GM10248 (cell line): ENCODE measurements at regions of chr7 and their contacts with region 1.

Region 1: GRCh38 chr7:133434055-133434865 is 181.4 kb downstream of the EXOC4 start:
- DNase-seq: peak; percentile 19
- CTCF ChIP-seq: peak; percentile 34

Region 2: DNA sequence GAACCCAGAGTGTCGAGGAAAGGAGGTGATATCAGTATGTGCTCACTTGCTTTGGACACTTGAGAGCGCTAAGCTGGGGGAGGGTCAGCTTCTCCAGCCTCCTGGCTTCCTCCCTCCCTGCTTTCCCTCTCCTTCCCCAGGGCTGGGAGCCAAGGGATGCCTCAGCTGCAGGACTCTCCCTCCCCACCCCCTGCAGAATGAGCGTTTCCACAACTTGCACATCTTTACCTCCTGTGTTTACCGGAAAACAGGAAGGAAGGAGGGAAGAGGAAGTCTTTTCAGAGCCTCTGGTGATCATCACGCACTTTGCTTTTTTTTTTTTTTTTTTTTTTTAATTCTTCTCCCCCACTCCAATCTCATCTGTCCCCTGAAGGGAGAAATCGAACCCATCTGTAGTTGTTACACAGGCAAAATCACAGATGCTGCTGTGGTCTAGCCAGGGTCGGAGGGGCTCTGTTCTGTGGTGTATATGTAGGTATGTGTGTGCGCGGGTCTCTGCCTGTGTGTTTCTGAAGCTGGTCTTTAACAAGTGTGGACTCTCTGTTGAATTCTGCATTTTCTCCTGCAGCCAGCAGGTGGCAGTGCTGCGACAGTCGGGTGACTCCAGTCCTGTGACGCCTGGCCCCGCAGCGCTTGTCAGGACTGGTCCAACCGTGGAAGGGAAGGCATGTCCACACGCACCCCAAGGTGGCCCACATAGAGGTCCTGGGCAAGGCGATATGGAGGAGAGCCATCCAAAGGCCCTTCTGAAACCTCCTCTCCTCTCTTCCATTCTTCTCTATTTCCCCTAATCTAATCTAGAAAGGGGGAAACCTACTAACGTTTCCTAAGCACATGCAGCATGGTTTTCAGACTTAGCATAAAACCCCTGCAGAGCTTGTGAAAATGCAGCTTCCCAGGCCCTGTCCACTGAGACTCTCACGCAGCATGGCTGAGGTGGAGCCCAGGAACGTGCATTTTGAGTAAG is 1115.6 kb before region 1 on chr7:
- CTCF ChIA-PET with region 1: interaction called, 12 read pairs
- POLR2A ChIA-PET with region 1: no interaction called
- DNase-seq: peak; percentile 83
- CTCF ChIP-seq: peak; percentile 96

Region 3: DNA sequence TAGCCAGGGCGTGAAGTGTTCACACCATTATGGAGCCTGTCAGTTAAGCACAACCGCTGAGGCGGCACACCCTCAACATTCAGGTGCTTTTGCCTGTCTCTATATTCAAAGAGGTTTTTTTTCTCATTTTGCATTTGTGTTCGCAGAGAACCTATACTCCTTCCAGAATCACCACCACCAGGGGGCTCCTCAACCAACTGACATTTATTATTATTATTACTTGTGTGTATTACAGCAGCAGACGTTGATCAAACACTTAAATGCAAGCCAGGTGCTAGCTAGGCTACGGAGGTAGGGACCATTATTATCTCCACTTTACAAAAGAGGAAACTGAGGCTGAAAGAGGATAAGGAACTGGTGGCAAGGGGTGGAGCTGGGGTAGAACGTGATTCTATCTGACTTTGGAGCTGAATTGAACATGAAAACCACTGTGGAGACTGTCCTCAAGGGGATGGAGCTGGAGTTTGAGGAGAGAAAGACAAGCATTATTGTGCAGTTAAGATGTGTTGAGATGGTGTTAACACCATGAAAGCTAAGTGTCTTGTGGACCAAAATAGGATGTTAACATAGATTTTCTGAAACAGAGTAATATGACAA is 724.2 kb before region 1 on chr7:
- CTCF ChIA-PET with region 1: interaction called, 19 read pairs
- POLR2A ChIA-PET with region 1: no interaction called
- DNase-seq: no peak
- CTCF ChIP-seq: peak; percentile 16

Region 4: GRCh38 chr7:133423618-133424017 is 10.6 kb before region 1 on chr7:
- CTCF ChIA-PET with region 1: interaction called, 24 read pairs
- POLR2A ChIA-PET with region 1: no interaction called
- DNase-seq: no peak
- CTCF ChIP-seq: no peak

Region 5: GRCh38 chr7:133645884-133646391 is 211.7 kb after region 1 on chr7:
- CTCF ChIA-PET with region 1: no interaction called
- POLR2A ChIA-PET with region 1: no interaction called
- DNase-seq: no peak
- CTCF ChIP-seq: no peak